ENCODE measurements at regions of chrX and their contacts with region 1.

Region 1: GRCh38 chrX:14303891-14304290 is 225.4 kb upstream of the GLRA2 start:
- DNase-seq: no peak
- H3K4me3 ChIP-seq: no peak overlapping the region
- H3K27ac ChIP-seq: no peak overlapping the region
- H3K4me1 ChIP-seq: no peaks in the 10 kb centered on the region
- H3K27me3 ChIP-seq: no peaks in the 10 kb centered on the region
- CTCF ChIP-seq: no peak

Region 2: DNA sequence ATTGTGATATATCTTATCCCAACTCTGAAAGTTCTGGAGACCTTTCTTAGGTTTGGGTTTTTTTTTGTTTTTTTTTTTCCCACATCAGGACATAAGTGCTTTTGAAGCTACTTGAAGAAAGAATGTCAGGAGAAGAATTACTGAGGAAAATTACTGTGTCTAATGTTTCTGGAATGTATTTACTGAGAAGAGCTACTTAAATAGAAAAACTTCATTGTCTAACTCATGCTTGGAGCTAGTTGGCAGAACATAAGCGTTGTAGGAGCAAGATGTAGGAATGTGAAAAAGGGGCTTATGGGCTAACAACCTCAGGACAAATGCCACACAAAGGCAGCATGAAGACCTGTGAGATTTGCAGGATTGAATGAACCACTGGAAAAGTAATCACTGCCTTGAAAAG is 58.8 kb after region 1 on chrX:
- dilution Hi-C with region 1: loop called (anchors 5 kb)
- DNase-seq: no peak
- H3K4me3 ChIP-seq: no peak overlapping the region
- H3K27ac ChIP-seq: no peak overlapping the region
- H3K4me1 ChIP-seq: peaks cover 8% of the 10 kb centered on the region
- H3K27me3 ChIP-seq: no peaks in the 10 kb centered on the region
- CTCF ChIP-seq: no peak